Common myeloid progenitor, CD34-positive (primary cell): ENCODE measurements at regions of chr1 and their contacts with region 1.

Region 1: DNA sequence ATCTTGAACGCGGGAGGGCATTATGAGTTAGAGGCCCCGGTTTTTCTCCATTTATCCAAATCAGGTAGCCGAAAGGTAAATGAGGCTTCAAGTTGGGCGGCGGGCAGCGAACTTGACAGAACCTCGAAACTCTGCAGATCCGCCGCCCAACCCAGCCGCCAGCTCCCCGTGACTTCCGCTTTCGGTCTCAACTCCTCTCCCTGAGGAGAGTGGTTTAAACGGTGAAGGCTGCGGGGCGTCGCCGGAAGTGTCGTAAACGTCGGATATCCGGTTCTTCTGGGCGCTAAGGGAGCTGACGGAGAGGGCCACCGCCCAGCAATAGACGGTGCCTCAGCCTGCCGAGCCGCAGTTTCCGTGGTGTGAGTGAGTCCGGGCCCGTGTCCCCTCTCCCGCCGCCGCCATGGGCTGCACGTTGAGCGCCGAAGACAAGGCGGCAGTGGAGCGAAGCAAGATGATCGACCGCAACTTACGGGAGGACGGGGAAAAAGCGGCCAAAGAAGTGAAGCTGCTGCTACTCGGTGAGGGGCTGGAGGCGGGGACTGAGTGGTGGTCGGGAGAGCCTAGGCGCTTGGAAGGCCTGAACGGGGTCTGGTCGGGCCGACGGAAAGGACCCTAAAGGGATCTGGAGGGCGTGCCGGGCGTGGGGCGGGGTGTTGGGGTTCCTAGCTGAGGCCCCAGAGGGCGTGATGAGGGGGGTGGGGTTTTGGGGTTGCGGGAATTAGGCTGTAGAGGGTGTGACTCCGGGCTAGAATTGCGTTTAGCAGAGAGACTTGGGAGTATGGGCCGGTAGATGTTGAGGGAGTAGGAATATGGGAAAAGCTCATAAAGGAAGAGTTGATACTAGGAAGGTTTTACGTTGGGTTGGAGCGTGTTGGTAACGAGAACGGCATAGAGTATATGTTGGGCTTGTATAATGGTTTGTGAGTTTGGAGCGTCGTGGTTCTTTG is at the start of gene GNAI3:
- DNase-seq: peak; percentile 98 to 99 (median 99)
- H3K4me3 ChIP-seq: peak within 1 kb of the TSS; percentile 96 to 99 (median 98)
- H3K27ac ChIP-seq: peak within 1 kb of the TSS; percentile 95 to 98
- H3K4me1 ChIP-seq: peaks cover 21 to 35% (median 32%) of the 10 kb centered on the region in 4 experiments
- H3K27me3 ChIP-seq: no peaks in the 10 kb centered on the region

Region 2: DNA sequence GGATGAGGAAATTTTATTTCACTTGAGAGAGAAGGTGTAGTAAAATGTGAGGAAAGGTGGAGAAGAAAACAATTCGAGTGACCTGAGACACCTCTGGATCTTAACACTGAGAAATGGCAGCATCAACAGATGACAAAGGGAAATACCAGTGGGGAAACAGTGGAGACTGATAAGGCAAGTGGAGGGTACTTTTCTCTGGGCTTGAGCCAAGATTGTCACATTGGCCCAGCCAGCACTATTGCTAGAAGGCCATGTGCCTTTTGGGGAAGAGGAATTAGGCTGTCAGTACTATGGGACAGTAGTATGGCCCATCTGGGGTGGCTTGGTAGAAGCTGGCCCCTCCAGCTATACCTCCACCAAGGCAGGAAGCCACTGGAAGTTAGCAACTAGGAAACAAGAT is 73.9 kb before region 1 on chr1:
- CTCF ChIA-PET with region 1: no interaction called
- POLR2A ChIA-PET with region 1: no interaction called
- DNase-seq: peak in 2 of 3 donors; percentile 44 to 50
- H3K4me3 ChIP-seq: no peak overlapping the region
- H3K27ac ChIP-seq: no peak overlapping the region
- H3K4me1 ChIP-seq: peaks cover 0 to 9% (median 6%) of the 10 kb centered on the region in 4 experiments
- H3K27me3 ChIP-seq: peaks cover 10 to 47% (median 21%) of the 10 kb centered on the region in 5 experiments

Region 3: GRCh38 chr1:109570417-109570827 is 21.8 kb after region 1 on chr1:
- CTCF ChIA-PET with region 1: interaction called, 14 read pairs
- POLR2A ChIA-PET with region 1: interaction called, 5 read pairs
- DNase-seq: no peak
- H3K4me3 ChIP-seq: no peak overlapping the region
- H3K27ac ChIP-seq: no peak overlapping the region
- H3K4me1 ChIP-seq: peaks cover 7 to 29% (median 20%) of the 10 kb centered on the region in 4 experiments
- H3K27me3 ChIP-seq: no peaks in the 10 kb centered on the region